ENCODE measurements at regions of chr10 and their contacts with region 1.

Region 1: DNA sequence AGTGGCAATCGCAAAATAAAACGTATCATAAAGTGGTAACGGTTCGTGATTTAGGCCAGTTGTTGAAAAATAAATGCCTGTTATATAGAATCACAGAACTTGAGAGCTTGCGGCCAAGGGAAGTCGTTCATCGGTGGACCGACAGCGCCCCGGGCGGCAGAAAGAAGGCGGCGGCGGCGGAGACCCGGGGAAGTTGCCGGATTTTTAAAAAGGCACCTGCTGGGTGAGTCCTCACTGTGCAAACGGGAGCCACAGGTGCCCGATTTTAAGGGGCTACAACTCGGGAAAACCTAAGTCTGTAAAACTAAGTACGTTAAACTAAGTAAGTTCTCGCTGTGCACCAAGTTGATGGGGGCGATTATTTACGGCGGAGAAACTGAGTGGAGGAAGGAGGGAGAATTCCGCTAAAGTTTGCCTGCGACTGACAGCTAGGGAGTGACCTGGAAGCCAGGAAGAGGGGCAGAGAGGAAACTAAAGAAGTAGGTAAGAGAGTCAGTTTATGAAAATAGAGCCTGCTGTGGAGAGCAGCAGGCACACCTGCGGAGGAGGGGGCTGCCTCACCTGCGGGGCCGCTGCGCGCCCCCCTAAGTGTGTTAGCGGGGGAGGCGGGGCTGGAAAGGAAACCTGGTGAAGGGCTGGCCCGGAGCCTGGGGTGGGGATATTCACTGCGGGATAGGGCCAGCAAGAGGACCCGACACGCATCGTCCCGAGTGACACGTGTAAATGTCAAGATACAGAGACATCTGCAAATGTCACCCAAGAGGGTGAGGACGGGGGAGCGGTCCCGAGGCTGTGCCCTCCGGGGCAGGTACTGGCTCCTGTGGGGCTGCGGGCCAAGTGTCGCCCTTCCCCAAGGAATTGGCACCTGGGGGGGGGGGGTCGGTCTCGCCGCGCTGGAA is 1.0 kb downstream of the ADAM12 start:
- DNase-seq: peak; percentile 72
- ATAC-seq: peak; percentile 67
- H3K4me3 ChIP-seq: peak overlapping the region; percentile 64
- H3K27ac ChIP-seq: no peak overlapping the region
- H3K4me1 ChIP-seq: peaks cover 9% of the 10 kb centered on the region
- H3K27me3 ChIP-seq: no peaks in the 10 kb centered on the region; the same call in 1 of the 2 replicates
- CTCF ChIP-seq: peak; percentile 93
- POLR2A ChIP-seq: peak; percentile 31; the same call in 1 of the 2 replicates
- RAD21 ChIP-seq: peak; percentile 86

Region 2: GRCh38 chr10:125868372-125868975 is 518.8 kb before region 1 on chr10:
- CTCF ChIA-PET with region 1: no interaction called
- POLR2A ChIA-PET with region 1: no interaction called
- dilution Hi-C with region 1: no loop called
- in situ Hi-C with region 1: no loop called
- intact Hi-C with region 1: loop called (anchors 2 kb)
- DNase-seq: peak; percentile 65
- ATAC-seq: peak; percentile 44; the same call in 1 of the 2 replicates
- H3K4me3 ChIP-seq: no peak overlapping the region
- H3K27ac ChIP-seq: no peak overlapping the region
- H3K4me1 ChIP-seq: peaks cover 13% of the 10 kb centered on the region
- H3K27me3 ChIP-seq: no peaks in the 10 kb centered on the region
- CTCF ChIP-seq: peak; percentile 75
- POLR2A ChIP-seq: no peak
- RAD21 ChIP-seq: peak; percentile 87

Region 3: GRCh38 chr10:125982260-125982948 is 404.9 kb before region 1 on chr10:
- CTCF ChIA-PET with region 1: interaction called, 8 read pairs
- POLR2A ChIA-PET with region 1: no interaction called
- dilution Hi-C with region 1: no loop called
- in situ Hi-C with region 1: loop called (anchors 5 kb)
- intact Hi-C with region 1: loop called (anchors 1 kb)
- DNase-seq: peak; percentile 74
- ATAC-seq: peak; percentile 90
- H3K4me3 ChIP-seq: no peak overlapping the region
- H3K27ac ChIP-seq: no peak overlapping the region
- H3K4me1 ChIP-seq: no peaks in the 10 kb centered on the region
- H3K27me3 ChIP-seq: peaks cover 20% of the 10 kb centered on the region; the same call in 1 of the 2 replicates
- CTCF ChIP-seq: peak; percentile 71
- POLR2A ChIP-seq: no peak
- RAD21 ChIP-seq: peak; percentile 92

Region 4: GRCh38 chr10:126133906-126134656 is 253.2 kb before region 1 on chr10:
- CTCF ChIA-PET with region 1: no interaction called
- POLR2A ChIA-PET with region 1: no interaction called
- dilution Hi-C with region 1: no loop called
- in situ Hi-C with region 1: no loop called
- intact Hi-C with region 1: loop called (anchors 1 kb)
- DNase-seq: peak; percentile 93
- ATAC-seq: peak; percentile 81
- H3K4me3 ChIP-seq: no peak overlapping the region
- H3K27ac ChIP-seq: no peak overlapping the region
- H3K4me1 ChIP-seq: peaks cover 9% of the 10 kb centered on the region
- H3K27me3 ChIP-seq: no peaks in the 10 kb centered on the region
- CTCF ChIP-seq: no peak
- POLR2A ChIP-seq: no peak
- RAD21 ChIP-seq: no peak

Region 5: DNA sequence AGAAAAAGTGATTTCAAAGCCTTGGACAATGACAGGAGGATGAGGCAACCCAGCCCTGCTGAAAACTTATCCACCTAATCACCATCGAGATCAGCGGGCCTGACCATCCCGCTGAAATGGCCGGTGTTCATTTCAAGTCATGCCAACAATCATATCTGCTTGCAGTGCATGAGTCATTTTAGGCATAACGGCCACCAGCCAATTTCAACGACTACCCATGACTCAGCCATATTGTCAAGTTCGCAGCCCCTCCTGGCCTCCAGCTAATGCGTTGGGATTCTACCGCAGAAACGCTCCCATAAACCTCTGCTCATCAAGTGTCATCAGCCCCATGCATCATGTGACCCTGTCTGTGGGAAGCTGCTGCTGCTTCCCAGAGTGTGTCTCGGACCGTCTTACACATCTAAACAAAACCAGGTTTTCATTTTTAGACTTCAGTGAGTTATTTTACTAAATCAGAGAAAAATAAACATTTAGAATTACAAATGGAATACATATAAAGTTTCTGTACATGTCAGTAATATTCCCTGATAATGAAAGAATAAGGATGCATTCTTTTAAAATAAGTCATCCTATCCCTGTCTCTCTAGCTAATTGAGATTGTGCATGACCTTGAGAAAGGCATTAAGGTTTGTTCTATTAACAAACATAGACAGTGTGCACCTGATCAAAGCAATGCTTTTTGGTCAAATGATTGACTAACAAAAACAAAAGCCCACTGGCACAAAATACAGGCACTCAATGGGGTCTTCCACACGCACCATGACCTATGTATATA is 187.9 kb before region 1 on chr10:
- CTCF ChIA-PET with region 1: no interaction called
- POLR2A ChIA-PET with region 1: no interaction called
- dilution Hi-C with region 1: no loop called
- in situ Hi-C with region 1: no loop called
- intact Hi-C with region 1: loop called (anchors 10 kb)
- DNase-seq: peak; percentile 100
- ATAC-seq: peak; percentile 93
- H3K4me3 ChIP-seq: no peak overlapping the region
- H3K27ac ChIP-seq: no peak overlapping the region
- H3K4me1 ChIP-seq: peaks cover 4% of the 10 kb centered on the region; the same call in 1 of the 2 replicates
- H3K27me3 ChIP-seq: no peaks in the 10 kb centered on the region
- CTCF ChIP-seq: no peak
- POLR2A ChIP-seq: no peak; the same call in 1 of the 2 replicates
- RAD21 ChIP-seq: peak; percentile 17; the same call in 1 of the 2 replicates

Region 6: DNA sequence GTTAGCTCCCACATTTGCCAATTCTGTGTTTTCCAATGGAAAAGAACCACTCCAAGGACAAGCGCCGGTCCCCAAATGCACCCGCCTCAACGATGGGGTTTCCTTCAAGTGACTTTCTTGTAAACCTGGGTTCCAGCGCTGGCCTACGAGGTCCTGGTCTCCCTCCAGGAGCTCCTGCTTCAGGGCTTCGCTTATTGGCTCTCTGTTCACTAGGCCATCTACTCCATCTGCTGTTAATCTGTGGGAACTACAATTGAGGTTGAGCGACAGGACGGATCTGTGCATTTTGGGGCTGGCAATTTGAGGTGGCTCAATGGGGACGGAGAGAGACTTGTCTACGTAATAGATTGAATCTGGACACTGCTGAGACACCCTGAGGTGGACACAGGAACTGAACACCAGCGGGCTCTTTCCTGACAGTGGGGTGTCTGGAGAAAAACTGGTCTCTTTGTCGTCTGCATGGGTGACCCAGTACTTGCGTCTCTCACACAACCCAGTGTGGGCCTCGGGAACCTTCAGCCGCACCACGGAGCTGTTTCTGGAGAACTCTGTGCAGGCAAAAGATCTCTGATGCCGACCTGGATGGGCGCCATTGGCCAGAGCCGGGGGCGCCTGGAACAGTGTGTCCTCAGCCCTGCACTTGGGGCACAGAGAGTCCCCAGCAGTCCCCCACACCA is 116.9 kb after region 1 on chr10:
- CTCF ChIA-PET with region 1: interaction called, 3 read pairs
- POLR2A ChIA-PET with region 1: no interaction called
- dilution Hi-C with region 1: no loop called
- in situ Hi-C with region 1: no loop called
- intact Hi-C with region 1: loop called (anchors 1 kb)
- DNase-seq: peak; percentile 64
- ATAC-seq: peak; percentile 93
- H3K4me3 ChIP-seq: no peak overlapping the region
- H3K27ac ChIP-seq: no peak overlapping the region
- H3K4me1 ChIP-seq: peaks cover 3% of the 10 kb centered on the region; the same call in 1 of the 2 replicates
- H3K27me3 ChIP-seq: peaks cover 6% of the 10 kb centered on the region; the same call in 1 of the 2 replicates
- CTCF ChIP-seq: peak; percentile 79
- POLR2A ChIP-seq: no peak
- RAD21 ChIP-seq: peak; percentile 93

Measured in IMR-90 (cell line).